HepG2 (cell line): ENCODE measurements at regions of chr6 and their contacts with region 1.

Region 1: GRCh38 chr6:131949909-131950766 is 1.0 kb downstream of the CCN2 start:
- DNase-seq: peak; percentile 75
- ATAC-seq: peak; percentile 60
- H3K4me3 ChIP-seq: peak overlapping the region; percentile 78 to 94 (median 93)
- H3K27ac ChIP-seq: peak overlapping the region; percentile 83
- H3K4me1 ChIP-seq: peaks cover 68% of the 10 kb centered on the region
- H3K27me3 ChIP-seq: peaks cover 0 to 3% of the 10 kb centered on the region in 2 experiments; a peak in 1 of 5 replicates
- CTCF ChIP-seq: peak; percentile 83
- EP300 ChIP-seq: no peak
- POLR2A ChIP-seq: peak; percentile 55 to 79
- RAD21 ChIP-seq: peak; percentile 80

Region 2: GRCh38 chr6:131844243-131844841 is 105.8 kb before region 1 on chr6:
- CTCF ChIA-PET with region 1: no interaction called
- POLR2A ChIA-PET with region 1: interaction called, 10 read pairs
- in situ Hi-C with region 1: no loop called
- intact Hi-C with region 1: no loop called
- DNase-seq: peak; percentile 98
- ATAC-seq: peak; percentile 92
- H3K4me3 ChIP-seq: peak overlapping the region; percentile 65 to 80 (median 74)
- H3K27ac ChIP-seq: peak overlapping the region; percentile 66
- H3K4me1 ChIP-seq: peaks cover 93% of the 10 kb centered on the region
- H3K27me3 ChIP-seq: no peaks in the 10 kb centered on the region; a peak in 1 of 5 replicates
- CTCF ChIP-seq: no peak
- EP300 ChIP-seq: peak; percentile 86 to 97; a peak in 3 of 4 replicates
- POLR2A ChIP-seq: peak; percentile 72 to 73; a peak in 3 of 4 replicates
- RAD21 ChIP-seq: no peak; the same call in 1 of the 2 replicates

Region 3: DNA sequence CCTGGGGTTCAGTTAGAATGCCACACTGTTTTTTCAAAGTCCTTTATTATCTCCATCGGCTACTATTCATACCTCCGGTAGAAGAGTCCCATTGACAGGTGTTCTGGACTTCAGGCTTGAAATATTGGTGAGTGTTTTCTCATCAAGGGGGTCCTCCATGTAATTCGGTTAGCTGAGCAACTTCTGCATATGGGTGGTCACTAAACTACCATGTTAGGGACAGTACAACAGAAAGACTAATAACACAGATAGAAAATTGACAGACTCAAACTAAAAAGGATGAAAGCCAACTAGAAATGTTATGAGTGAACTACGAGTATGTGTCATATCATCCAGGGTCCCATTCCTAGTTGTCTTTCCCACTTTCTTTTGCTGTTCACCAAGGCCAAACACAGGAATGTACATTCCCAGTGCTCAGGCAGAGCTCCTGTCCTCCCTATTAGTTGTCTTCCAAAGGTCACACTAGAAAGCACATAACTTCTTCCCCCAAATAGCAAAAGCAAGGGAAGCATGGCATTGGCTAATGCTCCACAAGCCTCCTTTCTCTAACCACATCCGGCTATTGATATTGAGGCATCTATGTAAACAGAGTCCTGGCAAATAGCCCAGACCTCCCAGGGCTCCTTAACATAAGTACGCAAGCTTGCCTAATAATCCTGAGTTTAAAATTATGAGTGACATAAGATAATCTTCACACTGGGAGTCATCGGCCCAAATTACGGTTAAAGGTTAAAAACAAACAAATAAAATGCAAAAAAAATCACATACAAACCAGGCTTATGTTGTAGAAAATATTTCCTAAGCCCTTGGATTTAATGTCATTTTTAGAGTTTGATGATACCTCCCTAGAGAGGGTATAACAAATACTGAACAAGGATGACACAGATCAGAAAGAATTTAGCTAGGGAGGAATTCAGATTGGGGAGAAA is 12.2 kb before region 1 on chr6:
- CTCF ChIA-PET with region 1: no interaction called
- POLR2A ChIA-PET with region 1: interaction called, 217 read pairs
- in situ Hi-C with region 1: no loop called
- intact Hi-C with region 1: loop called (anchors 1 kb)
- DNase-seq: peak; percentile 100
- ATAC-seq: peak; percentile 98
- H3K4me3 ChIP-seq: peak overlapping the region in 1 of 3 experiments; percentile 7; a peak in 1 of 6 replicates
- H3K27ac ChIP-seq: peak overlapping the region; percentile 56
- H3K4me1 ChIP-seq: peaks cover 46% of the 10 kb centered on the region
- H3K27me3 ChIP-seq: no peaks in the 10 kb centered on the region
- CTCF ChIP-seq: no peak
- EP300 ChIP-seq: peak; percentile 40 to 97; a peak in 3 of 4 replicates
- POLR2A ChIP-seq: no peak
- RAD21 ChIP-seq: no peak

Region 4: GRCh38 chr6:131979515-131980337 is 29.6 kb after region 1 on chr6:
- CTCF ChIA-PET with region 1: interaction called, 7 read pairs
- POLR2A ChIA-PET with region 1: interaction called, 400 read pairs
- in situ Hi-C with region 1: no loop called
- intact Hi-C with region 1: loop called (anchors 1 kb)
- DNase-seq: no peak
- ATAC-seq: no peak
- H3K4me3 ChIP-seq: no peak overlapping the region
- H3K27ac ChIP-seq: peak overlapping the region; percentile 98
- H3K4me1 ChIP-seq: peaks cover 97% of the 10 kb centered on the region
- H3K27me3 ChIP-seq: no peaks in the 10 kb centered on the region
- CTCF ChIP-seq: no peak
- EP300 ChIP-seq: no peak
- POLR2A ChIP-seq: no peak
- RAD21 ChIP-seq: no peak

Region 5: GRCh38 chr6:132020138-132020581 is 70.0 kb after region 1 on chr6:
- CTCF ChIA-PET with region 1: interaction called, 10 read pairs
- POLR2A ChIA-PET with region 1: interaction called, 55 read pairs
- in situ Hi-C with region 1: loop called (anchors 5 kb)
- intact Hi-C with region 1: loop called (anchors 1 kb)
- DNase-seq: no peak
- ATAC-seq: no peak; the same call in 2 of the 3 replicates
- H3K4me3 ChIP-seq: no peak overlapping the region
- H3K27ac ChIP-seq: peak overlapping the region; percentile 25
- H3K4me1 ChIP-seq: peaks cover 44% of the 10 kb centered on the region
- H3K27me3 ChIP-seq: no peaks in the 10 kb centered on the region
- CTCF ChIP-seq: no peak
- EP300 ChIP-seq: no peak
- POLR2A ChIP-seq: no peak
- RAD21 ChIP-seq: no peak

Region 6: GRCh38 chr6:132218059-132218696 is 268.0 kb after region 1 on chr6:
- CTCF ChIA-PET with region 1: interaction called, 12 read pairs
- POLR2A ChIA-PET with region 1: interaction called, 5 read pairs
- in situ Hi-C with region 1: no loop called
- intact Hi-C with region 1: loop called (anchors 1 kb)
- DNase-seq: peak; percentile 25
- ATAC-seq: no peak
- H3K4me3 ChIP-seq: no peak overlapping the region
- H3K27ac ChIP-seq: no peak overlapping the region
- H3K4me1 ChIP-seq: no peaks in the 10 kb centered on the region
- H3K27me3 ChIP-seq: peaks cover 0 to 6% of the 10 kb centered on the region in 2 experiments; a peak in 2 of 5 replicates
- CTCF ChIP-seq: peak; percentile 44
- EP300 ChIP-seq: no peak
- POLR2A ChIP-seq: no peak
- RAD21 ChIP-seq: peak; percentile 55

Region 7: GRCh38 chr6:132365281-132365907 is 415.3 kb after region 1 on chr6:
- CTCF ChIA-PET with region 1: no interaction called
- POLR2A ChIA-PET with region 1: no interaction called
- in situ Hi-C with region 1: no loop called
- intact Hi-C with region 1: no loop called
- DNase-seq: no peak
- ATAC-seq: no peak
- H3K4me3 ChIP-seq: no peak overlapping the region
- H3K27ac ChIP-seq: no peak overlapping the region
- H3K4me1 ChIP-seq: no peaks in the 10 kb centered on the region
- H3K27me3 ChIP-seq: no peaks in the 10 kb centered on the region; a peak in 1 of 5 replicates
- CTCF ChIP-seq: no peak
- EP300 ChIP-seq: no peak
- POLR2A ChIP-seq: no peak
- RAD21 ChIP-seq: no peak